ENCODE measurements at regions of chr10 and their contacts with region 1.

Region 1: GRCh38 chr10:28676968-28677887 is at the start of gene BAMBI:
- DNase-seq: peak; percentile 93 to 100
- H3K4me3 ChIP-seq: peak within 1 kb of the TSS; percentile 90
- H3K4me3 Mint-ChIP-seq: peak within 1 kb of the TSS; percentile 99
- H3K27ac Mint-ChIP-seq: peak within 1 kb of the TSS; percentile 85
- H3K4me1 ChIP-seq: peaks cover 47% of the 10 kb centered on the region
- H3K4me1 Mint-ChIP-seq: peaks cover 26% of the 10 kb centered on the region
- H3K27me3 ChIP-seq: no peaks in the 10 kb centered on the region
- H3K27me3 Mint-ChIP-seq: no peaks in the 10 kb centered on the region
- CTCF ChIP-seq: peak; percentile 72 to 90
- total RNA-seq, gene BAMBI: 146 and 165 TPM in 2 replicates

Region 2: DNA sequence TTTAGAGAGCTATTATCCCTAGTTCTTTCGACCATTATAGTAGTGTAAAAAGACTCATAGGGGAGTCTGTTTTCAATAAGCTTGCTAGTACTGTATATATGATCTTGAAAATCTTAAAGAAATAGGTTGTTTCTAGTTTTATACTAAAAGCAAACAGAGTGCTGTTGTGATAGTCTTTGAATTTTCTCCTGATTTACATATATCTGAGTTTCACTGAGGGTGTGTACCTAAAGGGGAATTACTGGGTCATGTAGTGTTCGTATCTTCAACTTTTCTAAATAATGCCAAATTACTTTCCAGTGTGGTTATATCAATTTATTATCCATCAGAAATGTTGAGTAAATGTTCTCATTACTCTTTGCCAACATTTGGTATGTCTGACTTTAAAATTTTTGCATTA is 70.7 kb before region 1 on chr10:
- CTCF ChIA-PET with region 1: no interaction called
- POLR2A ChIA-PET with region 1: no interaction called
- intact Hi-C with region 1: no loop called
- DNase-seq: no peak
- H3K4me3 ChIP-seq: no peak overlapping the region
- H3K4me3 Mint-ChIP-seq: no peak overlapping the region
- H3K27ac Mint-ChIP-seq: no peak overlapping the region
- H3K4me1 ChIP-seq: no peaks in the 10 kb centered on the region
- H3K4me1 Mint-ChIP-seq: peaks cover 6% of the 10 kb centered on the region
- H3K27me3 ChIP-seq: no peaks in the 10 kb centered on the region
- H3K27me3 Mint-ChIP-seq: no peaks in the 10 kb centered on the region
- CTCF ChIP-seq: no peak

Region 3: GRCh38 chr10:28663576-28664313 is 13.5 kb before region 1 on chr10:
- CTCF ChIA-PET with region 1: interaction called, 10 read pairs
- POLR2A ChIA-PET with region 1: interaction called, 9 read pairs
- intact Hi-C with region 1: no loop called
- DNase-seq: peak; percentile 88 to 90
- H3K4me3 ChIP-seq: no peak overlapping the region
- H3K4me3 Mint-ChIP-seq: no peak overlapping the region
- H3K27ac Mint-ChIP-seq: no peak overlapping the region
- H3K4me1 ChIP-seq: peaks cover 12% of the 10 kb centered on the region
- H3K4me1 Mint-ChIP-seq: peaks cover 34% of the 10 kb centered on the region
- H3K27me3 ChIP-seq: no peaks in the 10 kb centered on the region
- H3K27me3 Mint-ChIP-seq: peaks cover 3% of the 10 kb centered on the region
- CTCF ChIP-seq: peak; percentile 99

Region 4: DNA sequence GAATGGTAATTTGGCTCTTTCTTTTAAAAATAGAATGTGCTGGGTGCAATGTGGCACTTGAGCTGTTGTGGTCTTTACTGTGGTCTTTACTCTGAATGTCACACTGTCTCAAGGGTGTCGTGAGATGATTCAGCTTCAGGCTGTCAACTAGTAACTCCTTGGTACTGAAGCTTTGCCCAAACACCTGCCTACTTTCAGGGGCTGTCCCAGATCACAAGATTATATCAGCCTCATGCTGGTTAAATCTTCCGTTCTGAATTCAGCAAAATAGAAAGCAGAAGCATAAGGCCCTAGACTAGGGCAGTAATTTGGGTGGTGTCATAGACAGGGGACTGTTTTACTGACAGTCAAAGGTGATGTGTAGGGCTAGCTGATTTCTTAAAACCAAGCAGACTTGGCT is 111.0 kb after region 1 on chr10:
- CTCF ChIA-PET with region 1: no interaction called
- POLR2A ChIA-PET with region 1: no interaction called
- intact Hi-C with region 1: loop called (anchors 5 kb)
- DNase-seq: no peak
- H3K4me3 ChIP-seq: no peak overlapping the region
- H3K4me3 Mint-ChIP-seq: no peak overlapping the region
- H3K27ac Mint-ChIP-seq: no peak overlapping the region
- H3K4me1 ChIP-seq: peaks cover 21% of the 10 kb centered on the region
- H3K4me1 Mint-ChIP-seq: peaks cover 24% of the 10 kb centered on the region
- H3K27me3 ChIP-seq: no peaks in the 10 kb centered on the region
- H3K27me3 Mint-ChIP-seq: no peaks in the 10 kb centered on the region
- CTCF ChIP-seq: no peak

Region 5: DNA sequence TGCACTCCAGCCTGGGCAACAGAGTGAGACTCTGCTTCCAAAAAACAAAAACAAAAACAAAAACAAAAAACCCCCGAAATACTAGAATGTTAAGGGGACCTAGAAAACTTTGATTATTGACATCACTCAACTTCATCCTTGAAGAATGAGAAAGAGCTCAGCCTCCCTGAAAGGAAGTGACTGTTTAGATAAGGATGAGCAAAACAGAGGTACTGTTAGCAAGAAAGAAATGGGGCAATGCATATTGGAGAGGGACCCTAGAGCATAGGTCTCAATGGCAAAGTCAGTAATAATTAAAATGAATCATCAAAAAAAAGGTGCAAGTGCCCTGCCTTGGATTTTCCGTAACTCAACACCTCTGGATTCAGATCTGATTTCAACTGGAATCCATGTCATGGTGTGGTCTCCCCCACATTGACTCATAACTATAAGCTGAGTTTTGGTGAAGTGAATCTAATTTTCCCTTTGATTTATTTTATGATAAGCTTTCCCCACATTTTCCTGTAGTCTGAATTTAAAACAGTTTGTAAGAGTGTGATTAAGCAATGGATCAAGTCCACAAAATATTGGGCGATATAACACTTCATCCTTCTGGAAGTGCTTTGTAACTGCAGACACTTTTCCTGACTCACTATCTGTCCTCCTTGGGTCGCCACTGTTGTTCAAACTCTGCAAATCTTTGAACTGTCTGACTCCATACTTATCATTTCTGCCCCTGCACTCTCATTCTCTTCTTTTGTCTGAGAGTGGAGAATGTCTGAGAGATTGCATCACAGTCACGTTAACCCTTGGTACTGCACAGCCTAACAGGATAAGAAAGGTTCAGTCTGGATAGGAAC is 386.8 kb after region 1 on chr10:
- CTCF ChIA-PET with region 1: no interaction called
- POLR2A ChIA-PET with region 1: no interaction called
- intact Hi-C with region 1: loop called (anchors 2 kb)
- DNase-seq: peak; percentile 87 to 89
- H3K4me3 ChIP-seq: 0 out of 2 replicates have a peak overlapping the region, but pooled peaks have one; percentile 14
- H3K4me3 Mint-ChIP-seq: peak overlapping the region; percentile 32
- H3K27ac Mint-ChIP-seq: peak overlapping the region; percentile 68
- H3K4me1 ChIP-seq: peaks cover 60% of the 10 kb centered on the region
- H3K4me1 Mint-ChIP-seq: peaks cover 41% of the 10 kb centered on the region
- H3K27me3 ChIP-seq: no peaks in the 10 kb centered on the region
- H3K27me3 Mint-ChIP-seq: no peaks in the 10 kb centered on the region
- CTCF ChIP-seq: peak; percentile 19 to 47

Region 6: GRCh38 chr10:29239569-29240472 is 562.6 kb after region 1 on chr10:
- CTCF ChIA-PET with region 1: no interaction called
- POLR2A ChIA-PET with region 1: no interaction called
- intact Hi-C with region 1: loop called (anchors 5 kb)
- DNase-seq: peak; percentile 74 to 78
- H3K4me3 ChIP-seq: no peak overlapping the region
- H3K4me3 Mint-ChIP-seq: no peak overlapping the region
- H3K27ac Mint-ChIP-seq: peak overlapping the region; percentile 55
- H3K4me1 ChIP-seq: peaks cover 45% of the 10 kb centered on the region
- H3K4me1 Mint-ChIP-seq: peaks cover 28% of the 10 kb centered on the region
- H3K27me3 ChIP-seq: no peaks in the 10 kb centered on the region
- H3K27me3 Mint-ChIP-seq: no peaks in the 10 kb centered on the region
- CTCF ChIP-seq: peak; percentile 79 to 87

Region 7: GRCh38 chr10:29304264-29305030 is 627.2 kb after region 1 on chr10:
- CTCF ChIA-PET with region 1: interaction called, 3 read pairs
- POLR2A ChIA-PET with region 1: no interaction called
- intact Hi-C with region 1: loop called (anchors 1 kb)
- DNase-seq: peak; percentile 74 to 86
- H3K4me3 ChIP-seq: no peak overlapping the region
- H3K4me3 Mint-ChIP-seq: peak overlapping the region; percentile 55
- H3K27ac Mint-ChIP-seq: peak overlapping the region; percentile 48
- H3K4me1 ChIP-seq: peaks cover 14% of the 10 kb centered on the region; the same call in 1 of the 2 replicates
- H3K4me1 Mint-ChIP-seq: no peaks in the 10 kb centered on the region
- H3K27me3 ChIP-seq: no peaks in the 10 kb centered on the region
- H3K27me3 Mint-ChIP-seq: no peaks in the 10 kb centered on the region
- CTCF ChIP-seq: peak; percentile 95 to 99

Measured in Caco-2 (cell line).